Activated CD8-positive, alpha-beta T cell treated with anti-CD3 and anti-CD28 coated beads, Interleukin-2, amount 10 ng/mL, durations not matched to agents 7 days and 5 days (primary cell): ENCODE measurements at regions of chr17 and their contacts with region 1.

Region 1: GRCh38 chr17:7344399-7344798 is 7.6 kb upstream of the KCTD11 start:
- DNase-seq: no peak
- ATAC-seq: no peak
- H3K4me3 Mint-ChIP-seq: no peak overlapping the region
- H3K27ac Mint-ChIP-seq: no peak overlapping the region
- H3K4me1 Mint-ChIP-seq: peaks cover 44% of the 10 kb centered on the region
- H3K27me3 Mint-ChIP-seq: no peaks in the 10 kb centered on the region

Region 2: GRCh38 chr17:7323731-7324437 is 20.5 kb before region 1 on chr17:
- CTCF ChIA-PET with region 1: interaction called, 15 read pairs
- POLR2A ChIA-PET with region 1: interaction called, 15 read pairs
- DNase-seq: peak; percentile 71
- ATAC-seq: peak; percentile 48
- H3K4me3 Mint-ChIP-seq: no peak overlapping the region
- H3K27ac Mint-ChIP-seq: peak overlapping the region; percentile 49
- H3K4me1 Mint-ChIP-seq: peaks cover 29% of the 10 kb centered on the region
- H3K27me3 Mint-ChIP-seq: no peaks in the 10 kb centered on the region

Region 3: GRCh38 chr17:7329374-7329996 is 14.9 kb before region 1 on chr17:
- CTCF ChIA-PET with region 1: interaction called, 15 read pairs
- POLR2A ChIA-PET with region 1: interaction called, 54 read pairs
- DNase-seq: peak; percentile 98
- ATAC-seq: peak; percentile 63
- H3K4me3 Mint-ChIP-seq: peak overlapping the region; percentile 87
- H3K27ac Mint-ChIP-seq: peak overlapping the region; percentile 98
- H3K4me1 Mint-ChIP-seq: peaks cover 54% of the 10 kb centered on the region
- H3K27me3 Mint-ChIP-seq: no peaks in the 10 kb centered on the region

Region 4: DNA sequence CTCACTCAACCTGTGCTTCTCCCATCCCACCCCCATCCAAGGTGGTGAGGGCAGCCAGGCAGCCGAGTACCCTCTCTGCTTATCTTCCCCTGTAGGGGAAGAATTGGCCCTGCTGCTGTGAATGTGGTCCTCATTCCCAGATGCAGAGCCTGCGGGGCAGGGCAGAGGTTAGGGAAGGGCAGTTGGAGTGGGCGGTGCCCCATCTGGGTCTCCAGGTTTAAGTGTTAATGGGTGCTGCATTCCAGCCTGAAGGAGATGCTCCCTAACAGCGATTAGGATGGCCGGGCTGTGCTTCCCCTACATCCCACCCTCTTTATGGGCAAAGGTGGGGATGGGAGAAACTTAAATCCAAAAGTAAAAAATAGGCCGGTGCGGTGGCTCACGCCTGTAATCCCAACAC is 22.7 kb after region 1 on chr17:
- CTCF ChIA-PET with region 1: no interaction called
- POLR2A ChIA-PET with region 1: no interaction called
- DNase-seq: no peak
- ATAC-seq: no peak
- H3K4me3 Mint-ChIP-seq: no peak overlapping the region
- H3K27ac Mint-ChIP-seq: no peak overlapping the region
- H3K4me1 Mint-ChIP-seq: no peaks in the 10 kb centered on the region
- H3K27me3 Mint-ChIP-seq: peaks cover 2% of the 10 kb centered on the region

Region 5: GRCh38 chr17:7419819-7420610 is 75.6 kb after region 1 on chr17 and contains the start of gene SPEM1:
- CTCF ChIA-PET with region 1: no interaction called
- POLR2A ChIA-PET with region 1: no interaction called
- DNase-seq: no peak
- ATAC-seq: no peak
- H3K4me3 Mint-ChIP-seq: no peak within 1 kb of the TSS
- H3K27ac Mint-ChIP-seq: no peak within 1 kb of the TSS
- H3K4me1 Mint-ChIP-seq: no peaks in the 10 kb centered on the region
- H3K27me3 Mint-ChIP-seq: no peaks in the 10 kb centered on the region
- total RNA-seq, gene SPEM1: not detected